Cardiac septum (tissue), 1 donor: ENCODE measurements at regions of chr13 and their contacts with region 1.

Region 1: GRCh38 chr13:91185294-91185863 is 162.1 kb upstream of the MIR17HG start:
- DNase-seq: no peak

Region 2: DNA sequence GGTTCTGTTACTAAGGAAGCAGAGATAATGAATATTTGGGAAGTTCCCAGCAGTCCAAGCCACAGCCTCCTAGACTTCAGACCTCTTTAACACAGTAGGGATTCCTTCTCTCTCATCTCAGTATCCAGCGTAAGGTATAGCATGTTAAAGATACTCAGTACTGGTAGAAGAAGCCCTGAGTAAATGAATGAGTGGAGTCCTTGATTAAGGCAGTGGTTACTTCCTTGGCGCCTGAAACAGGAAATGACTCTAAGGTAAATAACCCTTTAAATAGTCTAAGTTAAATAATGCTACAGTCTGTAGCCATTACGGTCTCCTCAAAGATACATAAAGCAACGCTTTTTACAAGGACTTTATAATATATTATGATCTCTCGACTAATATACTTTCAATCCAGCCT is 488.7 kb before region 1 on chr13:
- intact Hi-C with region 1: no loop called
- DNase-seq: no peak

Region 3: DNA sequence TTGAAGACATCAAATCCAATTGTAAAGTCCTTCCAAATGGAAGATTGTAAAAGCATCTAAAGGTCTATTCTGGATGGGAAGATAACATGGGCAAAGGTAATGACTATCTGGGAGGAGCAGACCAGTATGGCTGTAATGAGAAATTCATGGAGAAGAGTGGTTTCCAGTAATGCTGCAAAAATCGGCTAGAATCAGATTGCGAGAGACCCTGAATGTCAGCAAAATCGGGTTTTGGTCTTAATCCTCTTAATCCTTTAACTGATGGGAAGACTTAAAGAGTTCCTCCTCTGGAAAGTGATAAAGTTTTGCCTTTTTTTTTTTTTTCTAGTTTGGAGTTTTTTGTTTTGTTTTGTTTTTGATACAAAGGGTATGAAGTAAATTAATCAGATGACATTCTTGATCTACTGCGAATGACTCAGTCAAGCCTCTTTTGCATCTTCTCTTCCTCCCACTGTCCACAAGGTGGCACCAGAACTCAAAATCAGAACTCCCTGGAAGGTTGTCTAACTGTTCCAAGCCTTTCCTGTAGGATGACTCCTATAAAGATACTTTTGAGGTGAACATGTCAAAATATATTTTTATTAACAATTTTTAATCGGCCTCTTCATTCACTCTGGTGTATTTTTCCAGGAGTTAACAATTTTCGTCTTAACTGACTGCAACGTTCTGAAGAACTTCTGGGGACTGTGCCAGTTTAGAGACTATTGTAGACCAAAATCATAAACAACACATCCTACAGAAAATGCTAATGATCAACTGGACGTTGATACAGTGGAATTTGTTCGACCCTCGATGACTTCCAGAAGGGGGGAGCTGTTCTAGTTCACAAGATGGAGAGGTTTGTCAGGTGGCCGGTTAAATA is 51.2 kb before region 1 on chr13:
- intact Hi-C with region 1: loop called (anchors 5 kb)
- DNase-seq: no peak